Caco-2 (cell line): ENCODE measurements at regions of chr5 and their contacts with region 1.

Region 1: GRCh38 chr5:177425801-177426565 is 493 bp upstream of the GRK6 start:
- DNase-seq: peak; percentile 100
- H3K4me3 ChIP-seq: peak overlapping the region; percentile 59
- H3K4me3 Mint-ChIP-seq: peak overlapping the region; percentile 92
- H3K27ac Mint-ChIP-seq: peak overlapping the region; percentile 99
- H3K4me1 ChIP-seq: peaks cover 15% of the 10 kb centered on the region
- H3K4me1 Mint-ChIP-seq: peaks cover 12% of the 10 kb centered on the region
- H3K27me3 ChIP-seq: no peaks in the 10 kb centered on the region
- H3K27me3 Mint-ChIP-seq: no peaks in the 10 kb centered on the region
- CTCF ChIP-seq: no peak

Region 2: GRCh38 chr5:177382423-177383029 is 43.5 kb before region 1 on chr5:
- CTCF ChIA-PET with region 1: interaction called, 8 read pairs
- POLR2A ChIA-PET with region 1: interaction called, 22 read pairs
- intact Hi-C with region 1: no loop called
- DNase-seq: peak in 1 of 2 experiments; percentile 53
- H3K4me3 ChIP-seq: no peak overlapping the region
- H3K4me3 Mint-ChIP-seq: no peak overlapping the region
- H3K27ac Mint-ChIP-seq: peak overlapping the region; percentile 36
- H3K4me1 ChIP-seq: peaks cover 30% of the 10 kb centered on the region
- H3K4me1 Mint-ChIP-seq: peaks cover 30% of the 10 kb centered on the region
- H3K27me3 ChIP-seq: no peaks in the 10 kb centered on the region
- H3K27me3 Mint-ChIP-seq: no peaks in the 10 kb centered on the region
- CTCF ChIP-seq: peak in 1 of 2 experiments; percentile 36

Region 3: DNA sequence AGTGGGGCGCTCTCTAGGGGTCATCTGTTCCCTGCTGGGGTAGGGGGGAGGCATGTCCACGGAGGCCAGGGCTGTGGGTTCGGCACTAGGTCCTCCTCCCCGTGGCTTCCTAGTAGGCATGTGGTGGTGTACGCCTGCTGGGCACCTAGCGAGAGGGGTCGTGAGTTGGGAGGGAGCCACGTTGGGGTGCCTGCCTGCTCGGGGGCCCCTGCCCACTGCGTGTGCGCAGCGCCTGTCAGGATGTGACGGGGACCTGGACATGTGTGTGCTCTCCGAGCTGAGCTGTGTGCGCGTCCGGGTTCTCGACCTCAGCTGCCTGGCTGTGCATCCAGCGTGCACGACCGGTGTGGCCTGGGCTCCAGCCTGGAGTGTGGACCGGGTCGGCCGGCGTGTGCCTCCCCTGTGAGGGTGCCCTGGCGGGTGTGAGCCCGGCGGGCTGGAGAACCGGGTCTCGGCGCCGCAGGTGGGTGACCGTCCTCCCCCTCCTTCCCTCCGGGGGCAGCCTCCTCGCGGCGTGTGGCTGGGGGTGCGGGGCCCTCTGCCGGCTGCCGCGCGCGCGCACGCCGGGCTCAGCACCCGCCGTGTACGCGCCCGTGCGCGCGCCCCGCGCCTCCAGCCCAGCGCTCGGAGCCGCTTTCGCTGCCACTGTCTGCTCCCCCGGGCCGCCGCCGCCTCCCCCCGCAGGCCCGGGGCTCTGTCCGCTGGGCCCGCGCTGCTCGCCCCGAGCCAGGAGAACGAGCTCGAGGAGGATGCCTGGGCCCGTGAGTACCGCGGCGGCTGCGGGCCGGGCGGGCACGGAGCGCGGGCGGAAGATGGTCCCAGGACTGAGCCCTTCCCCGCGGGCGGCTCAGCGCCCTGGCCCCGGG is 20.4 kb after region 1 on chr5 and contains the start of gene PRR7:
- CTCF ChIA-PET with region 1: interaction called, 6 read pairs
- POLR2A ChIA-PET with region 1: interaction called, 43 read pairs
- intact Hi-C with region 1: loop called (anchors 2 kb)
- DNase-seq: peak; percentile 70 to 84
- H3K4me3 ChIP-seq: peak within 1 kb of the TSS; percentile 78
- H3K4me3 Mint-ChIP-seq: peak within 1 kb of the TSS; percentile 70
- H3K27ac Mint-ChIP-seq: peak within 1 kb of the TSS; percentile 56
- H3K4me1 ChIP-seq: peaks cover 6% of the 10 kb centered on the region; the same call in 1 of the 2 replicates
- H3K4me1 Mint-ChIP-seq: peaks cover 8% of the 10 kb centered on the region
- H3K27me3 ChIP-seq: no peaks in the 10 kb centered on the region
- H3K27me3 Mint-ChIP-seq: peaks cover 6% of the 10 kb centered on the region
- CTCF ChIP-seq: no peak
- total RNA-seq, gene PRR7: 4.7 and 5.7 TPM in 2 replicates

Region 4: GRCh38 chr5:177497292-177498033 is 71.5 kb after region 1 on chr5 and contains the start of gene PDLIM7:
- CTCF ChIA-PET with region 1: no interaction called
- POLR2A ChIA-PET with region 1: interaction called, 4 read pairs
- intact Hi-C with region 1: loop called (anchors 1 kb)
- DNase-seq: peak; percentile 97 to 98
- H3K4me3 ChIP-seq: peak within 1 kb of the TSS; percentile 85
- H3K4me3 Mint-ChIP-seq: peak within 1 kb of the TSS; percentile 89
- H3K27ac Mint-ChIP-seq: peak within 1 kb of the TSS; percentile 63
- H3K4me1 ChIP-seq: peaks cover 25% of the 10 kb centered on the region
- H3K4me1 Mint-ChIP-seq: peaks cover 27% of the 10 kb centered on the region
- H3K27me3 ChIP-seq: no peaks in the 10 kb centered on the region
- H3K27me3 Mint-ChIP-seq: peaks cover 11% of the 10 kb centered on the region
- CTCF ChIP-seq: peak in 1 of 2 experiments; percentile 26
- total RNA-seq, gene PDLIM7: 49.1 and 56.8 TPM in 2 replicates